Dendritic cell treated with granulocyte-macrophage colony-stimulating factor and Interleukin-4, amounts not matched to agents 40 ng/mL and 50 ng/mL, for 4 days (primary cell): ENCODE measurements at regions of chr11 and their contacts with region 1.

Region 1: GRCh38 chr11:19071255-19071654 is 10.7 kb upstream of the MRGPRX2 start:
- H3K4me3 Mint-ChIP-seq: peak overlapping the region; percentile 43
- H3K27ac Mint-ChIP-seq: no peak overlapping the region
- H3K4me1 Mint-ChIP-seq: no peaks in the 10 kb centered on the region
- H3K27me3 Mint-ChIP-seq: peaks cover 11% of the 10 kb centered on the region

Region 2: GRCh38 chr11:18844753-18845367 is 226.4 kb before region 1 on chr11:
- intact Hi-C with region 1: no loop called
- H3K4me3 Mint-ChIP-seq: no peak overlapping the region
- H3K27ac Mint-ChIP-seq: no peak overlapping the region
- H3K4me1 Mint-ChIP-seq: no peaks in the 10 kb centered on the region
- H3K27me3 Mint-ChIP-seq: peaks cover 1% of the 10 kb centered on the region

Region 3: DNA sequence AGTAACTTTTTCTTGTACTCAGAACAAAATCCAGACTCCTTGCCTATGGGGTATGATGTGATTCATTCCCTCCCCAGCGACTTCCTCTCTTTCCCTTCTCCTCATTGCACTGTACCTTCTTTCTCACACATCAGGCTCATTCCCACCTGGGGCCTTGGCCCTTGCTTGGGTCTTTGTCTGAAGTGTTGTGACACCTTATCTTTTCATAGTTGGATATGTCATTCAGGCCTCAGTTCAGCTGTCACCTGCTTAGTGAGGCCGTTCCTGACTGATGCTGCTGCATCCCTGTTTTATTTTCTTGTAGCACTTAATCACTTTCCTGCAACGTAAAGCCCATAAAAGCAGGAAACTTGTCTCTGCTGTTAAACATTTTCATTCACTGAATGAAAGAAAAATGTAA is 85.6 kb after region 1 on chr11:
- intact Hi-C with region 1: loop called (anchors 10 kb)
- H3K4me3 Mint-ChIP-seq: no peak overlapping the region
- H3K27ac Mint-ChIP-seq: no peak overlapping the region
- H3K4me1 Mint-ChIP-seq: no peaks in the 10 kb centered on the region
- H3K27me3 Mint-ChIP-seq: no peaks in the 10 kb centered on the region